ENCODE measurements at regions of chr5 and their contacts with region 1.

Region 1: GRCh38 chr5:81751009-81751835 is at the start of gene SSBP2:
- DNase-seq: peak; percentile 99
- ATAC-seq: peak; percentile 94
- total RNA-seq, gene SSBP2: 44.7 TPM

Region 2: DNA sequence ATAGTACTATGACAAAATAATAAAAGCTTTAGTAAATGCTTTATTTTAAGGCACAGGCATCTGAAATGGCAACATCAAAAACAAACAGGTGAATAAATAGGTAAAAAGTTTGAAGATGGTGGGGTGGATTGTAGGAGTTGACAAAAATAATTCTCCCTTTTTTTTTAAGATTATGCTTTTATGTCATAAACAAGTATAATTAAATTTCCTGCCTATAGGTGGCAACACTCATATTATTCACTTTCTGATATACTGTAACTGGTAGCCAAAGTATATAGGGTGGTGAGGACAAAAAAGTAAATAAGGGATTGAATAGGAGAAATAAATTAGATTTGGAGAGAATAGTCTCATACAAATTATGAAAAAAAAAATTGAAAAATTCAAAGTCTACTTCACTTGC is 237.2 kb before region 1 on chr5:
- intact Hi-C with region 1: loop called (anchors 10 kb)
- DNase-seq: no peak
- ATAC-seq: no peak

Region 3: DNA sequence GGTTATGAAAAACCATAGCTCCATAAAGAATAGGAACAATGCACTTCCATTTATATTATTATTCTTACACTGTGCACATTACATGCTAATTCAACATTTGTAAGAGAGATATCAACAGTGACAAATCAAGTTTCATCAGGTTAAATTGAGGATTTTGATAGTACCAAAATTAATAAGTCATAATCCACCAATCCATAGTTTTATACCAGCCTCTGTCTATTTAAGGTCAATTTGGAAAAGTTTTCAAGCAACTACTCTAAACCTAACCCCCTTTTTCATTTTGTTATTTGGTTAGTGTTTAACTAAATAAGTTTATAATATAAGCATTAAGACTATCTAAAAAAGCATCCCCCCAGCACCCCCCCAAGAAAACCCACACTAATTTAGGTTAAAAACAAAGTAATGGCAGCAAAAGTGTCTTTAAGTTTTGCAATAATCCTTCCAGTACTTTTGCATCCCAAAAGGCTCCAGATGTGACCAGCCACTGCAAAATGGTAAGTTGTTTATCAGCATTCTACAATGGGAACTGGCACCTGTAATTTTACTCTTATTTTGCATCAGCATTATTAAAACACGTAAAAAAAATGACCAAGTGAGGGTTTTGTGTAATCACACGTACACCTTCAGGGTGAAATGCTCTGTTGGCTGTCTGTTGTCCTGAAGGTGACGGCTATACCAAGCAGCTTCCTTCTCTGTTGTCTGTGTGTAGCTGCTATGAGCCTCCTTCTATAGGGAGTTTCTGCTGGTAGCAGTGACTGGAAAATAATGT is 36.4 kb after region 1 on chr5:
- intact Hi-C with region 1: loop called (anchors 5 kb)
- DNase-seq: no peak
- ATAC-seq: peak; percentile 81

Region 4: GRCh38 chr5:81851481-81852178 is 100.4 kb after region 1 on chr5:
- intact Hi-C with region 1: loop called (anchors 2 kb)
- DNase-seq: peak; percentile 99
- ATAC-seq: peak; percentile 95

Region 5: GRCh38 chr5:81971712-81972495 is 220.7 kb after region 1 on chr5 and contains the start of gene ATG10:
- intact Hi-C with region 1: loop called (anchors 5 kb)
- DNase-seq: peak; percentile 96
- ATAC-seq: peak; percentile 99
- total RNA-seq, gene ATG10: 4.3 TPM